CD8-positive, alpha-beta T cell (primary cell): ENCODE measurements at regions of chr3 and their contacts with region 1.

Region 1: GRCh38 chr3:27777022-27777421 is 54.9 kb upstream of the EOMES start:
- DNase-seq: no peak
- ATAC-seq: no peak
- H3K4me3 ChIP-seq: no peak overlapping the region
- H3K4me3 Mint-ChIP-seq: no peak overlapping the region
- H3K27ac ChIP-seq: no peak overlapping the region
- H3K27ac Mint-ChIP-seq: no peak overlapping the region
- H3K4me1 ChIP-seq: no peaks in the 10 kb centered on the region
- H3K4me1 Mint-ChIP-seq: peaks cover 4% of the 10 kb centered on the region
- H3K27me3 ChIP-seq: no peaks in the 10 kb centered on the region
- H3K27me3 Mint-ChIP-seq: no peaks in the 10 kb centered on the region
- CTCF ChIP-seq: no peak

Region 2: GRCh38 chr3:27749640-27750039 is 27.4 kb before region 1 on chr3:
- CTCF ChIA-PET with region 1: no interaction called
- POLR2A ChIA-PET with region 1: no interaction called
- intact Hi-C with region 1: loop called in 1 of 2 experiments (anchors 2 kb)
- DNase-seq: no peak
- ATAC-seq: no peak
- H3K4me3 ChIP-seq: no peak overlapping the region
- H3K4me3 Mint-ChIP-seq: no peak overlapping the region
- H3K27ac ChIP-seq: no peak overlapping the region
- H3K27ac Mint-ChIP-seq: no peak overlapping the region
- H3K4me1 ChIP-seq: no peaks in the 10 kb centered on the region
- H3K4me1 Mint-ChIP-seq: peaks cover 13% of the 10 kb centered on the region
- H3K27me3 ChIP-seq: no peaks in the 10 kb centered on the region
- H3K27me3 Mint-ChIP-seq: no peaks in the 10 kb centered on the region
- CTCF ChIP-seq: no peak

Region 3: GRCh38 chr3:29594261-29594660 is 1817.2 kb after region 1 on chr3:
- CTCF ChIA-PET with region 1: no interaction called
- POLR2A ChIA-PET with region 1: no interaction called
- intact Hi-C with region 1: no loop called
- DNase-seq: no peak
- ATAC-seq: no peak
- H3K4me3 ChIP-seq: no peak overlapping the region
- H3K4me3 Mint-ChIP-seq: no peak overlapping the region
- H3K27ac ChIP-seq: no peak overlapping the region
- H3K27ac Mint-ChIP-seq: no peak overlapping the region
- H3K4me1 ChIP-seq: no peaks in the 10 kb centered on the region
- H3K4me1 Mint-ChIP-seq: no peaks in the 10 kb centered on the region
- H3K27me3 ChIP-seq: no peaks in the 10 kb centered on the region
- H3K27me3 Mint-ChIP-seq: no peaks in the 10 kb centered on the region
- CTCF ChIP-seq: no peak